PC-9 (cell line): ENCODE measurements at regions of chr12 and their contacts with region 1.

Region 1: GRCh38 chr12:50246873-50247612 is 36.3 kb downstream of the LIMA1 start:
- DNase-seq: peak; percentile 83 to 98
- H3K4me3 ChIP-seq: no peak overlapping the region
- H3K27ac ChIP-seq: peak overlapping the region; percentile 97
- H3K4me1 ChIP-seq: peaks cover 96% of the 10 kb centered on the region
- H3K27me3 ChIP-seq: no peaks in the 10 kb centered on the region
- CTCF ChIP-seq: 0 out of 2 replicates have a peak, but pooled peaks have one; percentile 13

Region 2: GRCh38 chr12:50201978-50202521 is 45.0 kb before region 1 on chr12:
- CTCF ChIA-PET with region 1: interaction called, 4 read pairs
- POLR2A ChIA-PET with region 1: interaction called, 7 read pairs
- intact Hi-C with region 1: loop called (anchors 2 kb)
- DNase-seq: peak; percentile 75 to 96
- H3K4me3 ChIP-seq: peak overlapping the region; percentile 54; the same call in 1 of the 2 replicates
- H3K27ac ChIP-seq: peak overlapping the region; percentile 100
- H3K4me1 ChIP-seq: peaks cover 59% of the 10 kb centered on the region
- H3K27me3 ChIP-seq: no peaks in the 10 kb centered on the region
- CTCF ChIP-seq: no peak

Region 3: DNA sequence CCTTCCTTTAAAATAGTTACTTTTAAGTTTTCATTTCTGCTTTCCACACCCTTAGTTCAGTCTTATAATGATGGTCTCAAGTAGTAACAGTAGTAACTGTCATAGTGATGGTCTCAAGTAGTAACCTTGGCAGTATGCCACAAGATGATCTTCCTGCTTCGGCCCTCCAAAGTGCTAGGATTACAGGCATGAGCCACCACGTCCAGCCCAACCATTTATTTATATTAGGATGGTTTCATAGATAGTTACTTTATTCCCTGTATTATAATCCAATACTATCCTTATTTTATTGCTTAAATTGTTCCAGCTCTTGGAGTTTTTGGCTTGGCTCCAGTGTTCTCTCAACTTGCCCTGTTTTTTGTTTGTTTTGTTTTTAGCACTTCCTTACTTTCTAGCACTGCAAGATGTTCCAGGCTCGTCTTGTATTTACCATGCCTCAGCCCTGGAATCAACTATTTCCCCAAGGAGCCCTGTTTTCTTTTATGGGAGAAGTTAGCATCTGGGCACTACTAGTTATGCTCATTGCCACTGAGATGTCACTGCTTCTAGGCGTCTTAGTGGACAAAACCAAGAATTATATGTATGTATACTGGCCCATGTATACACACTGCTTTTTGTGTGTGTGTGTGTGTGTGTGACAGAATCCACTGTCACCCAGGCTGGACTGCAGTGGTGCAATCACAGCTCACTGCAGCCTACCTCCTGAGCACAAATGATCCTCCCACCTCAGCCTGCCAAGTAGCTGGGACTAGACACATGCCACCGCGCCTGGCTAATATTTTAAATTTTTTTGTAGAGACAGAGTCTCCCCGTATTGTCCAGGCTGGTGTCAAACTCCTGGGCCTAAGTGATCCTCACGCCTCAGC is 10.9 kb after region 1 on chr12:
- CTCF ChIA-PET with region 1: interaction called, 4 read pairs
- POLR2A ChIA-PET with region 1: interaction called, 7 read pairs
- intact Hi-C with region 1: loop called (anchors 1 kb)
- DNase-seq: no peak
- H3K4me3 ChIP-seq: no peak overlapping the region
- H3K27ac ChIP-seq: peak overlapping the region; percentile 98
- H3K4me1 ChIP-seq: peaks cover 73% of the 10 kb centered on the region
- H3K27me3 ChIP-seq: no peaks in the 10 kb centered on the region
- CTCF ChIP-seq: no peak

Region 4: DNA sequence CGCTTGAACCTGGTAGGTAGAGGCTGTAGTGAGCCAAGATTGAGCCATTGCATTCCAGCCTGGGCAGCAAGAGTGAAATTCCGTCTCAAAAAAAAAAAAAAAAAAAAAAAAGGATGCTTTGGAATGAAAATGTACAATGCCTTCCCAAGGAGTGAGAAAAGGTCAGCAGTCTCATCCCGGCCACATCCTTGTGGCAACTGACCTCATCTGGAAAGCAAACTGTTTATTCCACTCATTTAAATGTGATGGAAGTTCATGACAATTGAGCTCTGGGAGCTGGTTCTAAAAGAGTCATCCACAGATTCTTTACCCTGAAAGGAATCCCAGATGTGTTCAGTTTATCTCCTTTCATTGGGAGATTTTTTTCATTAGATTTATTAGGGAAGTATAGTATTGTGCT is 55.6 kb after region 1 on chr12:
- CTCF ChIA-PET with region 1: interaction called, 12 read pairs
- POLR2A ChIA-PET with region 1: no interaction called
- intact Hi-C with region 1: no loop called
- DNase-seq: no peak
- H3K4me3 ChIP-seq: no peak overlapping the region
- H3K27ac ChIP-seq: no peak overlapping the region
- H3K4me1 ChIP-seq: peaks cover 24% of the 10 kb centered on the region
- H3K27me3 ChIP-seq: no peaks in the 10 kb centered on the region
- CTCF ChIP-seq: no peak

Region 5: GRCh38 chr12:50400598-50401364 is 153.7 kb after region 1 on chr12 and contains the start of gene LARP4:
- CTCF ChIA-PET with region 1: no interaction called
- POLR2A ChIA-PET with region 1: no interaction called
- intact Hi-C with region 1: loop called (anchors 10 kb)
- DNase-seq: peak; percentile 86 to 93
- H3K4me3 ChIP-seq: peak within 1 kb of the TSS; percentile 83
- H3K27ac ChIP-seq: peak within 1 kb of the TSS; percentile 88
- H3K4me1 ChIP-seq: peaks cover 50% of the 10 kb centered on the region
- H3K27me3 ChIP-seq: no peaks in the 10 kb centered on the region
- CTCF ChIP-seq: no peak
- total RNA-seq, gene LARP4: 49.2 and 74.2 TPM in 2 replicates